WTC11 (cell line): ENCODE measurements at regions of chr1 and their contacts with region 1.

Region 1: GRCh38 chr1:203340112-203340804 is 10.7 kb downstream of the FMOD start:
- DNase-seq: peak; percentile 75
- ATAC-seq: peak; percentile 73
- H3K4me3 Mint-ChIP-seq: no peak overlapping the region
- H3K27ac Mint-ChIP-seq: no peak overlapping the region
- H3K4me1 Mint-ChIP-seq: peaks cover 31% of the 10 kb centered on the region
- H3K27me3 Mint-ChIP-seq: 0 out of 2 replicates have a peak, but pooled peaks cover 5% of the 10 kb centered on the region
- CTCF ChIP-seq: peak; percentile 75

Region 2: DNA sequence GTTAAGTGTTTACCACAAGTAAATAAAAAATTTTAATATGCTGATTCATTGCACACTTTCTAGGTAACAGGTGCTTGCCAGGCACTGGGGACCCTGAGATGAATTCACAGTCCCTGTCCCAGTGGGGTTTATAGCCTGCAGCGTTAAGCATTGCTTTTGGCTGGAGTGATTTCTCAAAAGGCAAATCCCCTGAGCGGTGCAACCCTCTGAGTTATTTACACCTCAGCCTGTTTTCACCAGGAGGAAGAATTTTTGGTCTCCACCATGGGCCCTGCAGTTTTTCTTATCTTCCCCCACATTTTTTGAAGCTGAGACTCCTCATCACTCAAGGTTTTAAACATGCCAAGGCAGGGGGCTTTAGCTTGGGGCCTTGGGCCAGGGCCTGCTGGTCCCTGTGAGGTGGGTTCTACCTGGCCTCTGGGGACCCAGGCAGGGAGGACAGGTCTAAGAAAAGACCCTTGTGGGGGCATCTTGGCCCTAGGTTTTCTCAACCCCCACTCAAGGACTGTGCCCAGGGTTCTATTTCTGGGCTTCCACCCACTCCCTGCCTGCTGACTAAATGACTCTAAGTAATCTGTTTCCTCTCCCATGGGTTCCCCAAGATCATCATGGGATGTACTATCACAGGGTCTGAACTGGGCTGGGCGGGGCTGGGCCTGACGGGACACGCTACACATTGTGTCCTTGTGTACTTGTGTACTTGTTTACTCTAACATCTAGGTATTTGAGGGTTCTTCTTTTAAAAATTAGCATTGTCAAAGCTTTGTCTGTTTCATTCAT is 100.5 kb before region 1 on chr1:
- CTCF ChIA-PET with region 1: no interaction called
- POLR2A ChIA-PET with region 1: no interaction called
- DNase-seq: no peak
- ATAC-seq: no peak
- H3K4me3 Mint-ChIP-seq: no peak overlapping the region
- H3K27ac Mint-ChIP-seq: no peak overlapping the region
- H3K4me1 Mint-ChIP-seq: no peaks in the 10 kb centered on the region
- H3K27me3 Mint-ChIP-seq: peaks cover 42% of the 10 kb centered on the region
- CTCF ChIP-seq: no peak

Region 3: DNA sequence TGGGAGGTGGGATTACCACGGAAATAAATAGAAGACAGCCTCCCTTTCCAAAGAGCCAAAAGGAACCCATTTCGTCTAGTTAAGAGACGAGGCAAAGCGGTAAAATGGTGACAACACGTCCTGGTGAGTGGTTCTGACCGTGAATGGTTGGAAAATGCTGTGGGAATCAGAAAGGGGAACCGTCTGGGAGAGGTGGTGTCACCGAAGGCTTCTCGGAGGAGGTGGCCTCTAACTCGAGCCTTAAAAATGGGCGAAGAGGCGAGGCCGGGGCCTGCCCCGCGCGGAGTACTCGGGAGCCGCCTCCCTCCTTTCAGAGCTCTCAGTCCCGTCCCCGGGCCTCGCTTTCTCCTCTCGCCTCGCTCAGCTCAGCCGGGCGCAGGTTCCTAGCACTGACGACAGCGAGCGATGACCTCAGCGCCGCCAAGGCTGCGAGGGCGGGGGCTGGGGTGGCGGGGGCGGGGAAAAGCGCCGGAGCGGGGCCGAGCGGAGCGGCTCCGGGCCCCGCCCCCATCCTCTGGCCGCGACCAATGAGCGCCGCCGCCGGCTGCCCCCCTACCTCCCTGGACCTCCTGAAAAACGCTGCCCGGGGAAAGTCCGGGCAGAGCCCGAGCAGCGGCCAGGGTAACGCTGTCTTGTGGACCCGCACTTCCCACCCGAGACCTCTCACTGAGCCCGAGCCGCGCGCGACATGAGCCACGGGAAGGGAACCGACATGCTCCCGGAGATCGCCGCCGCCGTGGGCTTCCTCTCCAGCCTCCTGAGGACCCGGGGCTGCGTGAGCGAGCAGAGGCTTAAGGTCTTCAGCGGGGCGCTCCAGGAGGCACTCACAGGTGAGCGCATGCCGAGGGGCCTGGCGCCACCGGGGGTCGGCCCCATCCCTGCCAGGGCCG is 35.1 kb before region 1 on chr1 and contains the start of gene BTG2:
- CTCF ChIA-PET with region 1: interaction called, 20 read pairs
- POLR2A ChIA-PET with region 1: interaction called, 7 read pairs
- DNase-seq: peak; percentile 84
- ATAC-seq: peak; percentile 80
- H3K4me3 Mint-ChIP-seq: peak within 1 kb of the TSS; percentile 79
- H3K27ac Mint-ChIP-seq: no peak within 1 kb of the TSS
- H3K4me1 Mint-ChIP-seq: peaks cover 55% of the 10 kb centered on the region
- H3K27me3 Mint-ChIP-seq: peaks cover 96% of the 10 kb centered on the region
- CTCF ChIP-seq: no peak
- total RNA-seq, gene BTG2: 13.5 to 19.4 TPM (median 15.4 TPM) in 3 replicates

Region 4: GRCh38 chr1:203351037-203352013 is 11.1 kb after region 1 on chr1 and contains the start of gene FMOD:
- CTCF ChIA-PET with region 1: interaction called, 40 read pairs
- POLR2A ChIA-PET with region 1: no interaction called
- DNase-seq: peak; percentile 49
- ATAC-seq: peak; percentile 97
- H3K4me3 Mint-ChIP-seq: no peak within 1 kb of the TSS
- H3K27ac Mint-ChIP-seq: no peak within 1 kb of the TSS; the same call in 1 of the 2 replicates
- H3K4me1 Mint-ChIP-seq: peaks cover 11% of the 10 kb centered on the region
- H3K27me3 Mint-ChIP-seq: peaks cover 13% of the 10 kb centered on the region
- CTCF ChIP-seq: no peak
- total RNA-seq, gene FMOD: 0.05 to 0.79 TPM (median 0.14 TPM) in 3 replicates

Region 5: GRCh38 chr1:203440771-203441170 is 100.5 kb after region 1 on chr1:
- CTCF ChIA-PET with region 1: interaction called, 48 read pairs
- POLR2A ChIA-PET with region 1: no interaction called
- DNase-seq: peak; percentile 32
- ATAC-seq: peak; percentile 64
- H3K4me3 Mint-ChIP-seq: no peak overlapping the region
- H3K27ac Mint-ChIP-seq: no peak overlapping the region
- H3K4me1 Mint-ChIP-seq: peaks cover 24% of the 10 kb centered on the region
- H3K27me3 Mint-ChIP-seq: peaks cover 11% of the 10 kb centered on the region
- CTCF ChIP-seq: no peak

Region 6: GRCh38 chr1:203475012-203475981 is 135.0 kb after region 1 on chr1 and contains the start of gene PRELP:
- CTCF ChIA-PET with region 1: interaction called, 26 read pairs
- POLR2A ChIA-PET with region 1: no interaction called
- DNase-seq: peak; percentile 62
- ATAC-seq: peak; percentile 91
- H3K4me3 Mint-ChIP-seq: peak within 1 kb of the TSS; percentile 32
- H3K27ac Mint-ChIP-seq: no peak within 1 kb of the TSS
- H3K4me1 Mint-ChIP-seq: peaks cover 21% of the 10 kb centered on the region
- H3K27me3 Mint-ChIP-seq: no peaks in the 10 kb centered on the region; the same call in 1 of the 2 replicates
- CTCF ChIP-seq: no peak
- total RNA-seq, gene PRELP: 0.17 to 0.23 TPM (median 0.18 TPM) in 3 replicates

Region 7: GRCh38 chr1:203504397-203505250 is 164.4 kb after region 1 on chr1:
- CTCF ChIA-PET with region 1: interaction called, 10 read pairs
- POLR2A ChIA-PET with region 1: no interaction called
- DNase-seq: peak; percentile 87
- ATAC-seq: peak; percentile 88
- H3K4me3 Mint-ChIP-seq: no peak overlapping the region
- H3K27ac Mint-ChIP-seq: no peak overlapping the region
- H3K4me1 Mint-ChIP-seq: peaks cover 34% of the 10 kb centered on the region
- H3K27me3 Mint-ChIP-seq: no peaks in the 10 kb centered on the region; the same call in 1 of the 2 replicates
- CTCF ChIP-seq: peak; percentile 72